ENCODE measurements at regions of chr4 and their contacts with region 1.

Region 1: GRCh38 chr4:16843831-16844508 is 54.5 kb downstream of the LDB2 start:
- DNase-seq: peak; percentile 91
- H3K4me3 ChIP-seq: no peak overlapping the region
- H3K27ac ChIP-seq: no peak overlapping the region
- H3K27me3 ChIP-seq: no peaks in the 10 kb centered on the region
- CTCF ChIP-seq: no peak

Region 2: DNA sequence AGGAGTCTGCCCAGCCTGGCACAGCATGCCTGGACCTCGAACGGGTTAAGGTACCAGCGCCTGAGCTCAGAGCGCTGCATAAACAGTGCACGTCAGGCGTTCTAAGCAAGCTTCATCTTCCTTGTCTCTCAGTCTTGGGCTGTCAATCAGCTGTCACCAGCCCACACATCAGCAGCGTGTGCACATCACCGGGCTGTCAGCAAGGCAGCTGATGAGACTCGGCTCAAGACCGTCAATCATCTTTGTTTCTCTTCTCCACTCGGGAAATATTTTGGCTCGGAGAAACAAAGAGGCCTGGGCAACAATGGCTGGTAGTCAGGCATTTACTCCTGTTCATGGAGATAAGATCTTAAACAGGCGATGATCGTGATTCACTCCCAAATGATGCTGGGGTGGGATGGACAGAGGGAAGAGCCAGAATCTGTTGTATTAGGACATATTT is 86.9 kb before region 1 on chr4:
- CTCF ChIA-PET with region 1: no interaction called
- POLR2A ChIA-PET with region 1: interaction called, 13 read pairs
- DNase-seq: no peak
- H3K4me3 ChIP-seq: no peak overlapping the region
- H3K27ac ChIP-seq: no peak overlapping the region
- H3K27me3 ChIP-seq: no peaks in the 10 kb centered on the region
- CTCF ChIP-seq: no peak

Measured in AG04450 (cell line).